Sigmoid colon (tissue), 7 donors: ENCODE measurements at regions of chr12 and their contacts with region 1.

Region 1: GRCh38 chr12:26126340-26127284 is 1.8 kb upstream of the BHLHE41 start:
- DNase-seq: peak; percentile 96
- H3K4me3 ChIP-seq: peak overlapping the region; percentile 58 to 75 (median 68)
- H3K27ac ChIP-seq: peak overlapping the region; percentile 95 to 99 (median 98)
- H3K4me1 ChIP-seq: peaks cover 0 to 27% (median 19%) of the 10 kb centered on the region in 4 donors
- H3K27me3 ChIP-seq: no peaks in the 10 kb centered on the region
- CTCF ChIP-seq: no peak
- EP300 ChIP-seq: no peak
- POLR2A ChIP-seq: peak in 1 of 2 donors; percentile 10

Region 2: DNA sequence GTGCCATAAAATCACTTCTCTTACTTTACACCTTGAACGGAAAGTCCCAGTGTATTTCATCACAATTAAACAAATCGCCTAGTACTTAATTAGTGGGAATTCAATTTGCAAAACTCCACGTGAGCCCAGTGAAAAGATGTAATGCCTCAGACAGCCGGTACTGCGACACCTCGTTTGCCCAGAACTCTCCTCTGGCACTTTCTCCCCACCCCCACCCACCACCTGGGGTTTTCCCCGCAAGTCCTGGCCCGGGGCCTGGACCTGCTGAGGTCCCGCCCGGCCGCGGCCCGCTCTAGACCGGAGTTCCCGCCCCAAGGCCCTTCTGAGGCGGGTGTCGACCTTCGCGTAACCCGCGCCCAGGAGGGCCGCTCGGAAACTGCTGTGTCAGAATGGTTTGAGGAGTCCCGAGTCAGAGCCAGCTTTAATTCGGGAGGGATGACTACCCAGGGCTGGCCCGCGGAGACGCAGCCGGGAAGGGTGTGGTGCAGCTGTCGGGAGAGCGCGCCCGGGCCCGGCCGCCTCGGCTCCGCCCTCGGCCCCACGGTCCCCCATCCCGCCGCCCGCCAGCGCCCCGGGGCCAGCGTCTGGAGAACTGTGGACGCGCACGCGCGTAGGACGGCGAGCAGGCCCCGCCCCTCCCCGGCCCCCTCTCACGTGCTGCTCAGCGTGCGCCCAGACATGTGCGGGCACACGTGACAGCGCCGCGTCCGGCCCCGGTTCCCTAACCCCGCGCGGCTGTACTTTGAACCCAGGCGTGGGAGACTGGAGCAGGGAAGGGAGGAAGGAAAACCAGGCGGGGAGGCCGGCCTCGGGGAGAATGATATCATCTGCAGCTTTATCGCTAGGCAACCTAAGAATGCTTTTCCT is 12.5 kb before region 1 on chr12:
- intact Hi-C with region 1: loop called (anchors 1 kb)
- DNase-seq: peak; percentile 97
- H3K4me3 ChIP-seq: peak overlapping the region; percentile 34 to 57 (median 55)
- H3K27ac ChIP-seq: peak overlapping the region; percentile 91 to 95 (median 92)
- H3K4me1 ChIP-seq: peaks cover 0 to 21% (median 18%) of the 10 kb centered on the region in 4 donors
- H3K27me3 ChIP-seq: no peaks in the 10 kb centered on the region
- CTCF ChIP-seq: peak in 3 of 4 experiments; percentile 22 to 43 (median 37)
- EP300 ChIP-seq: peak in 3 of 4 donors; percentile 30 to 53 (median 39)
- POLR2A ChIP-seq: peak; percentile 61 to 63

Region 3: DNA sequence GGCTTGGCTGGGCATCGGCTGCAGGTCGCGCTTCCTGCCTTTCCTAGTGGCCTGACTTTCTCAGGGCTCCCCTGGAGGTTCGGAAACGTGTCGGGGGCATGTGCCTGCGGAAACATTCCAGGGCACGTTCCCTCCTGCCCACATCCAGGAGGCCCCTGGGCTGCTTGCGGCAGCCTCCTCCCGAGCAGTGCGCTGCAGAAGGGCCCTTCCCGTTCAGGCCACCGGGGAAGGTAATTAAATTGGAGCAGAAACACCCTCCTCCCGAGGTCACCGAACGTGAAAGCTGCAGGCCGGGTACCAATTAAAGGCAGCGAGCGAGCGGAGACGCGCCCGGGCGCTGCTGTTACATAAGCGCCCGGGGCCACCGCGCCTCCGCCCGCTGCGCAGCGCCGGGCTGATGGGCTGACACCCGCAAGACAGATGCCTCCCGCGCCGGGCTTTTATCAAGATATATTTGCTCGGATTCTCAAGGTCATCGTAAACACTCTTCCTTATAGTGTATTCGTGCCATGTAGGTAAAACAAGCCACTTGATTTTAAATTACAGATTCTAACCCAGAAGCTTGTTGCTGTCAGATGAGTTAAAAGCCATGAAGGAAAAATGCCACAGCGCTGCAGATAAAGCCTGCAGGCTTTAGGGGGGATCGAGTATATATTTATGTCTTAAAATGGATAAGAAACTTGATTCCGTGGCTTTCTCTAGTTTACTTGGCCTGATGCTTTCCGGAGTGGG is 100.2 kb after region 1 on chr12:
- intact Hi-C with region 1: loop called (anchors 10 kb)
- DNase-seq: peak; percentile 73
- H3K4me3 ChIP-seq: peak overlapping the region; percentile 20 to 58 (median 50)
- H3K27ac ChIP-seq: peak overlapping the region; percentile 75 to 82 (median 78)
- H3K4me1 ChIP-seq: peaks cover 0 to 16% (median 7%) of the 10 kb centered on the region in 4 donors
- H3K27me3 ChIP-seq: no peaks in the 10 kb centered on the region
- CTCF ChIP-seq: peak in 1 of 4 experiments; percentile 13
- EP300 ChIP-seq: no peak
- POLR2A ChIP-seq: no peak

Region 4: GRCh38 chr12:26274441-26275312 is 148.1 kb after region 1 on chr12:
- intact Hi-C with region 1: loop called (anchors 2 kb)
- DNase-seq: peak; percentile 95
- H3K4me3 ChIP-seq: no peak overlapping the region
- H3K27ac ChIP-seq: peak overlapping the region; percentile 77 to 85 (median 84)
- H3K4me1 ChIP-seq: peaks cover 0 to 34% (median 31%) of the 10 kb centered on the region in 4 donors
- H3K27me3 ChIP-seq: no peaks in the 10 kb centered on the region
- CTCF ChIP-seq: no peak
- EP300 ChIP-seq: peak in 1 of 4 donors; percentile 64
- POLR2A ChIP-seq: no peak

Region 5: DNA sequence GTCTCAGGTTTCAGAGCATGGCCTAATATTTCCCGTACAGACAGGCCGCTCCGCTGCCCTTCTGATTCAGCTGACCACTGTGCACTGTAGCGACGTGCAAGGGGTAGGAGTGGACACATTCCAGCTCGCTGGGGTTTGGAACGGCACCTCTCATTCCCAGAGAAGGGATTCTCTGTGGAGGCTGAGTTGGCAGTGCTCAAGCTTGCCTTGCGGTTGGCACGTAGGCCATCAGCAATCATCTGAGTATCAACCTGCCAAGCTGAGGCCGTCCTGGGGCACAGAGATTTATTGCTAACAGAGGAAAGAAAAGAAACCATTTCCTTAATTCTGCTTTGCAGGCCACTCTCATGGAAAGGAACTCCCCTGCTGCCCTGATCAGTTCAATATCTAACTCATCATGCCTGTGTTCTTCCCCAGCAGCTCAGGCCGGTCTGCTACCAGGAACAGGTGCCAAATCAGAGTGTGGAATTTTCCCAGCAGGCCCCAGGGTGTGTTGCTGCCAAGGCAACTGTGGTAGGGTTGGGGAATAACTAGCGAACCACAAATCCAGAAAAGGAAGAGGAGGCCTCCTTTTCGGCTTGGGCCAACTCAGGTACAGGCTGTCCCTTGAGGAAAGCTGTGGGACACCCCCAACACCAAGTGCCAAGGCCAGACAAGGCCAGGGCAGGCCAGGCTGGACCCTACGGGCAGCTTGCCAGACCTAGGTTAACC is 161.2 kb after region 1 on chr12:
- intact Hi-C with region 1: no loop called
- DNase-seq: no peak
- H3K4me3 ChIP-seq: no peak overlapping the region
- H3K27ac ChIP-seq: peak overlapping the region in 2 of 4 donors; percentile 20 to 35
- H3K4me1 ChIP-seq: peaks cover 0 to 11% (median 7%) of the 10 kb centered on the region in 4 donors
- H3K27me3 ChIP-seq: no peaks in the 10 kb centered on the region
- CTCF ChIP-seq: no peak
- EP300 ChIP-seq: no peak
- POLR2A ChIP-seq: no peak

Region 6: GRCh38 chr12:26327975-26328644 is 201.5 kb after region 1 on chr12:
- intact Hi-C with region 1: no loop called
- DNase-seq: no peak
- H3K4me3 ChIP-seq: no peak overlapping the region
- H3K27ac ChIP-seq: no peak overlapping the region
- H3K4me1 ChIP-seq: no peaks in the 10 kb centered on the region
- H3K27me3 ChIP-seq: no peaks in the 10 kb centered on the region
- CTCF ChIP-seq: no peak
- EP300 ChIP-seq: no peak
- POLR2A ChIP-seq: no peak

Region 7: GRCh38 chr12:26523708-26524150 is 397.1 kb after region 1 on chr12:
- intact Hi-C with region 1: loop called (anchors 5 kb)
- DNase-seq: peak; percentile 97
- H3K4me3 ChIP-seq: no peak overlapping the region
- H3K27ac ChIP-seq: peak overlapping the region; percentile 21 to 76 (median 64)
- H3K4me1 ChIP-seq: peaks cover 0 to 13% (median 6%) of the 10 kb centered on the region in 4 donors
- H3K27me3 ChIP-seq: no peaks in the 10 kb centered on the region
- CTCF ChIP-seq: peak in 1 of 4 experiments; percentile 28
- EP300 ChIP-seq: peak in 3 of 4 donors; percentile 4 to 78 (median 76)
- POLR2A ChIP-seq: no peak

Region 8: GRCh38 chr12:26786865-26787514 is 660.4 kb after region 1 on chr12:
- intact Hi-C with region 1: no loop called
- DNase-seq: no peak
- H3K4me3 ChIP-seq: no peak overlapping the region
- H3K27ac ChIP-seq: peak overlapping the region; percentile 40 to 78 (median 65)
- H3K4me1 ChIP-seq: peaks cover 0 to 67% (median 59%) of the 10 kb centered on the region in 4 donors
- H3K27me3 ChIP-seq: no peaks in the 10 kb centered on the region
- CTCF ChIP-seq: no peak
- EP300 ChIP-seq: no peak
- POLR2A ChIP-seq: no peak